ENCODE measurements at regions of chr21 and their contacts with region 1.

Region 1: GRCh38 chr21:36917471-36918158 is 48.9 kb downstream of the HLCS start:
- DNase-seq: peak; percentile 64
- H3K4me3 Mint-ChIP-seq: no peak overlapping the region
- H3K27ac Mint-ChIP-seq: peak overlapping the region; percentile 31
- H3K4me1 Mint-ChIP-seq: peaks cover 4% of the 10 kb centered on the region
- H3K27me3 Mint-ChIP-seq: no peaks in the 10 kb centered on the region
- CTCF ChIP-seq: peak; percentile 48

Region 2: GRCh38 chr21:36783612-36784383 is 133.8 kb before region 1 on chr21:
- CTCF ChIA-PET with region 1: interaction called, 5 read pairs
- POLR2A ChIA-PET with region 1: no interaction called
- intact Hi-C with region 1: loop called (anchors 10 kb)
- DNase-seq: peak; percentile 49
- H3K4me3 Mint-ChIP-seq: no peak overlapping the region
- H3K27ac Mint-ChIP-seq: peak overlapping the region; percentile 75
- H3K4me1 Mint-ChIP-seq: peaks cover 23% of the 10 kb centered on the region
- H3K27me3 Mint-ChIP-seq: no peaks in the 10 kb centered on the region
- CTCF ChIP-seq: no peak